Caco-2 (cell line): ENCODE measurements at regions of chr6 and their contacts with region 1.

Region 1: DNA sequence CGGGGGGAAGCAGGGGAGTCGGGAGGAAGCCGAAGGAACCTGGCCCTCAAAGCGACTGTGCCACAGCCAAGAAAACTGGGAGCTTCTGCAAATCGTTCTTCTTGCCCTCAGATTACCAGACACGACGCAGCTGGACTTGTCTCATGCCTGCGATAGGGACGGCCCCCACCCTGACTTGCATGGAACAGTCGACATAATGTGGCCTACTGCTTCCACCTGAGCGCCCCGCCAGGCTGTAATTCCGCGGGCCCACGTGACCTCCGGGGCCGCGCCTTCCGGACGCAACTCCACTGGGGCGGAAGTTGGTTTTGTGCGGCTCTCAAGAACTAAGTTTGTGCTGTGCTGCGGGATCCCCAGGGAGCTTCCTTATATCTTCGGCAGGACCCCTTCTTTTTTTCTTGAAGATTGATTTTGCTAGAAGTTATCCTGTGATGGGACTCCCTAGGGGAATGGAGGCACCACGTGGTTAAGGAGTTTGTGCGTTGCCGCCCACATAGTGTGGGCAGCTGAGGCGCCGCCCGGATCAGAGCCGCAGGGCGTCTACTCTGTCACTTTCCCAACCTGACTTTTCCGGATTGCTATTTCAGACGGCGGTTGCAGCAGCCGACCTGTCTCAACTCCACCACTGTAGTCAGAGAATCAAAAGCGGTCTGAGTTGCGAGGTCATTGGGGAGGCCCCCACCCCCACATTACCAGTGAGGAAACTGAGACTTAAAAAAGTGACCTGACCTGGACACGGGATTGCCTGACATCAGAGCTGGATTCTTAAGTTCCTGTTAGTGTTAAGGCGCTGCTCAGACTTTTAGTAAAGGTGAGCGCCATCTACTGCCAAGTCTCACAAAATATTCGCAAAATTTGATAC is 540 bp upstream of the CD164 start:
- DNase-seq: peak; percentile 91
- H3K4me3 ChIP-seq: peak overlapping the region; percentile 92
- H3K4me3 Mint-ChIP-seq: peak overlapping the region; percentile 97
- H3K27ac Mint-ChIP-seq: peak overlapping the region; percentile 99
- H3K4me1 ChIP-seq: peaks cover 22% of the 10 kb centered on the region
- H3K4me1 Mint-ChIP-seq: peaks cover 27% of the 10 kb centered on the region
- H3K27me3 ChIP-seq: no peaks in the 10 kb centered on the region
- H3K27me3 Mint-ChIP-seq: no peaks in the 10 kb centered on the region
- CTCF ChIP-seq: peak; percentile 44 to 54

Region 2: DNA sequence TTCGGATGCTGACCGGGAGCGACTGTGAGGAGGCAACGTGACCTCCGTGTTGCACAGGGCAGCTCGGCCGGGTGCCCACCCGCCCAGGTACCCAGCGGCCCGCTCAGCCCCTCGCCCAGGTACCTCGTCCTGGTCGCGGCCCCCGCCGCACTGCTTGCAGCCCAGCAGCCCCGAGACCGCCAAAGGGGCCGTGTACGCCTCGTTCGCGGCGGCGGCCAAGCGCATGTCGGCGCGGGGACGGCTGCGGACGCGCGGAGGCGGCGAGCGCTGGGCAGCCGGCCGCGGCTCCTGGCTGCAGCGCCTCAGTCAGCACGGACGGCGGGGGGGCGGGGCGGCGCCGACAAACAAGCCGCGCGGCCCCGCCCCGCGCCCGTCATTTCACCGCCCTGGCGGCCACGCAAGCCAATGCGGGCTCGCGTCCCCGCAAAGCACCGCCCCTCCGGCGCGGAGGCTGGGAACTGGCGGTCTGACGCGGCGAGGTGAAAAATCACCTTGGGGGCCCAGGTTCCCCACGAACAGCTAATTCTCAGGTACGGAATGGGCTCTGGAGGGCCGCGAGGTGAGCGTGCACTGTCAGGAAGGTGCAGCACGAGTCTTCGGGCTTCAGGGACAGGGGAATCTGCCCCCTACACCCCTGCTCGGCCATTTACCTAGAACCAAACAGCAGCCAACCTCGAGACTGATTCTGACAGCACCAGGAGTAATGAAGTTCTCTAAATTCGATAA is 373.4 kb before region 1 on chr6:
- CTCF ChIA-PET with region 1: no interaction called
- POLR2A ChIA-PET with region 1: no interaction called
- intact Hi-C with region 1: no loop called
- DNase-seq: peak; percentile 88 to 95
- H3K4me3 ChIP-seq: peak overlapping the region; percentile 82
- H3K4me3 Mint-ChIP-seq: peak overlapping the region; percentile 76
- H3K27ac Mint-ChIP-seq: peak overlapping the region; percentile 74
- H3K4me1 ChIP-seq: peaks cover 28% of the 10 kb centered on the region
- H3K4me1 Mint-ChIP-seq: peaks cover 18% of the 10 kb centered on the region
- H3K27me3 ChIP-seq: no peaks in the 10 kb centered on the region
- H3K27me3 Mint-ChIP-seq: no peaks in the 10 kb centered on the region
- CTCF ChIP-seq: no peak

Region 3: DNA sequence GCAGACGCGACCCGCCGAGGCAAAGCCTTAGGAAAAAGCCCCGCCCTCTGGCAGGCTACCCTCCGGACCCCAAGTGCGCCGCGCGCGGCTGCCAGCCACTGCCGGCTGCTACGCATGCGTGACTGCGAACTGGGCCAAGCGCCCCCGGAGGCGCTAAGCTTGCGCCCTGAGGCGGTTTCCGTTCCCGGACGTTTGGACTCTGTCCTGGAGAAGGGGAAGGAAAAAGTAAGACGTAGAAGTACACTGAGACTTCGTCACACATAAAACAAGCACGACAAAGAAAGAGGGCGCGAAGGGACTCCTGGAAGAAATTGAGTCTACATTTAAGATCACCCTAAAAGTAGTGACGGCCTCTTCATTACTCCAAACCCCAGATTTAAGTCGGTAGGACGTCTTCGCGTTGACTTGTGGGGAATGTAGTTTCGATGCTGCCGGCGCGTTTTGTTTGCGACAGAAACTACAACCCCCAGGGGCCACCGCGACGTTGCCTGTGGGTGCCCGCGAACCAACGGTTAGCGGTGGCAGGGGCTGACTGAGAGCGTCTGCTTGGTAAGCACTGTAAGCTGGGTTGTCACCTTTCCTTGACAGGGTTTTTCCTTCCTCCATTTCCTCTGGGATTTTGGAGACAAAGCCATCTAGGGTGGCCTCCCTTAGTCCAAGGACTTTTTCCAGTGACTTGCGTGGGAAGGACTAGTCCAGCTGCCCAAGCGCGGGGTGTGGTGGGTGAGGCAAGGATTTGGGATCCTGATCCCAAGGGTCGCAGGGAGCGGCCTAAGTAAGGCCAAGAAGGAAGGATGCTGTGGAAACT is 287.6 kb before region 1 on chr6 and contains the start of gene CEP57L1:
- CTCF ChIA-PET with region 1: interaction called, 13 read pairs
- POLR2A ChIA-PET with region 1: interaction called, 5 read pairs
- intact Hi-C with region 1: loop called (anchors 1 kb)
- DNase-seq: peak; percentile 98 to 99
- H3K4me3 ChIP-seq: peak within 1 kb of the TSS; percentile 63
- H3K4me3 Mint-ChIP-seq: peak within 1 kb of the TSS; percentile 97
- H3K27ac Mint-ChIP-seq: peak within 1 kb of the TSS; percentile 100
- H3K4me1 ChIP-seq: peaks cover 7% of the 10 kb centered on the region; the same call in 1 of the 2 replicates
- H3K4me1 Mint-ChIP-seq: peaks cover 15% of the 10 kb centered on the region
- H3K27me3 ChIP-seq: no peaks in the 10 kb centered on the region
- H3K27me3 Mint-ChIP-seq: no peaks in the 10 kb centered on the region
- CTCF ChIP-seq: no peak
- total RNA-seq, gene CEP57L1: 11.0 and 12.7 TPM in 2 replicates

Region 4: GRCh38 chr6:109187399-109188114 is 195.2 kb before region 1 on chr6:
- CTCF ChIA-PET with region 1: interaction called, 26 read pairs
- POLR2A ChIA-PET with region 1: interaction called, 3 read pairs
- intact Hi-C with region 1: loop called (anchors 1 kb)
- DNase-seq: peak in 1 of 2 experiments; percentile 63
- H3K4me3 ChIP-seq: no peak overlapping the region
- H3K4me3 Mint-ChIP-seq: no peak overlapping the region
- H3K27ac Mint-ChIP-seq: no peak overlapping the region
- H3K4me1 ChIP-seq: no peaks in the 10 kb centered on the region
- H3K4me1 Mint-ChIP-seq: peaks cover 2% of the 10 kb centered on the region
- H3K27me3 ChIP-seq: no peaks in the 10 kb centered on the region
- H3K27me3 Mint-ChIP-seq: peaks cover 3% of the 10 kb centered on the region
- CTCF ChIP-seq: peak; percentile 90 to 97

Region 5: GRCh38 chr6:109251839-109252238 is 131.0 kb before region 1 on chr6:
- CTCF ChIA-PET with region 1: no interaction called
- POLR2A ChIA-PET with region 1: no interaction called
- intact Hi-C with region 1: loop called (anchors 2 kb)
- DNase-seq: no peak
- H3K4me3 ChIP-seq: peak overlapping the region; percentile 53
- H3K4me3 Mint-ChIP-seq: peak overlapping the region; percentile 96
- H3K27ac Mint-ChIP-seq: peak overlapping the region; percentile 99
- H3K4me1 ChIP-seq: peaks cover 17% of the 10 kb centered on the region
- H3K4me1 Mint-ChIP-seq: no peaks in the 10 kb centered on the region
- H3K27me3 ChIP-seq: no peaks in the 10 kb centered on the region
- H3K27me3 Mint-ChIP-seq: no peaks in the 10 kb centered on the region
- CTCF ChIP-seq: no peak

Region 6: DNA sequence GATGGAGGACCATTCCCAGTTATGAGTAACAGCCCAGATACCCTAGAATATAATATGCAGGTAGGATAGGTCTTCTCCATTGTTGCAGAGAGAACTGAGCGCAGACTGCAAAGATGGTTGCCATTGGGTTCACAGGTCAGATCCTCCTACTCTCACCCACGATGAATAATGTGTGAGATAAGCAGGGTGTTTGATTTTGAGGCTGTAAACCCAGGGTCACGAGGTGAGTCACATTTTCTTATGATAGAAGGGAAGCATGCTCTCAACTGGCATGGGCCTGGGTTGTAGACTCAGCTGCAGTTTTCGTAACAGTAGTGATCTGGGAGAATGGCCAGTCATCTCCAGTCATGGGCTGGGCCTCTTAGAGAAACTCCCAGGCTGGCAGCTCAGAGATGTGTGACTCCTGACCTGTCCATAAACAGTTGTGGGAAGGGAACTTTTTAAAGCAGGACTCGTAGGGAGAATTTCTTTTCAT is 74.8 kb before region 1 on chr6:
- CTCF ChIA-PET with region 1: no interaction called
- POLR2A ChIA-PET with region 1: no interaction called
- intact Hi-C with region 1: loop called (anchors 5 kb)
- DNase-seq: peak; percentile 67 to 81
- H3K4me3 ChIP-seq: no peak overlapping the region
- H3K4me3 Mint-ChIP-seq: no peak overlapping the region
- H3K27ac Mint-ChIP-seq: no peak overlapping the region
- H3K4me1 ChIP-seq: peaks cover 17% of the 10 kb centered on the region
- H3K4me1 Mint-ChIP-seq: peaks cover 11% of the 10 kb centered on the region
- H3K27me3 ChIP-seq: no peaks in the 10 kb centered on the region
- H3K27me3 Mint-ChIP-seq: no peaks in the 10 kb centered on the region
- CTCF ChIP-seq: no peak

Region 7: GRCh38 chr6:109397020-109397419 is 14.2 kb after region 1 on chr6:
- CTCF ChIA-PET with region 1: interaction called, 14 read pairs
- POLR2A ChIA-PET with region 1: interaction called, 4 read pairs
- intact Hi-C with region 1: loop called (anchors 1 kb)
- DNase-seq: peak in 1 of 2 experiments; percentile 21
- H3K4me3 ChIP-seq: no peak overlapping the region
- H3K4me3 Mint-ChIP-seq: no peak overlapping the region
- H3K27ac Mint-ChIP-seq: no peak overlapping the region
- H3K4me1 ChIP-seq: no peaks in the 10 kb centered on the region
- H3K4me1 Mint-ChIP-seq: no peaks in the 10 kb centered on the region
- H3K27me3 ChIP-seq: no peaks in the 10 kb centered on the region
- H3K27me3 Mint-ChIP-seq: peaks cover 6% of the 10 kb centered on the region
- CTCF ChIP-seq: peak; percentile 28 to 42

Region 8: DNA sequence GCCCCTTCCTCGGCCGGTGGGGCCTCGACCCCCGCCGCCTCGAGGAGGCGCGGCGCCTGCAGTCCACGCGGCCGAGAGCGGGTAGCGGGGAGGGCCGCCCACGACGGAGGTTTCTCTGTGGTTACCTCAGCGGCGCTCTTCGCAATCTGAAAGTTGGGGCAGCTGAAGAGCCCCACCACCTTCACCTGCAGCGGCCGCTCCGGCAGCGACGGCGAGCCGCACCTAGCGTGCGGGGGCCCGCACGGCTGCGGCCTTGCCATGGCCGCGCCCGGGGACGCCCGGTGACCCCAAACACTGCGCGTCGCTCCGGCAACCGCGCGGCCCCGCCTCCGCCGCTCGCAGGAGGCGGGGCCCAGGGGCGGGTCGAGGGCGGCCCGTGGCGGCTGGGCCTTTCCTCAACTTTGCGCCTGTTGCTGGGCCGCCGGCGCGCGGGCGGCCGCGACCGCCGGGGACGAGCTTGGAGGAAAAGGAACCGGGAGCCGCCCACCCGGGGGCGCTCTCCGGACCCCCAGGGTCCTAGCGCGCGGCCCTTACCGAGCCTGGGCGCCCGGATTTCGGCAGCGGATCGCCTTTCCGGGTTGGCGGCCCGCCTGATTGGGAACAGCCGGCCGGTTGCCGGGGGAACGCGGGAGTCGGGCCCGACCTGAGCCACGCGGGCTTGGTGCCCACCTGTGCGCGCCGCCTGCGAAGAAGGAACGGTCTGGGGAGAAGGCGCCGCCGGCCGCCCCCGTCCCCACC is 57.7 kb after region 1 on chr6 and contains the starts of genes PPIL6 and SMPD2:
- CTCF ChIA-PET with region 1: interaction called, 3 read pairs
- POLR2A ChIA-PET with region 1: interaction called, 5 read pairs
- intact Hi-C with region 1: loop called (anchors 2 kb)
- DNase-seq: peak; percentile 83 to 90
- H3K4me3 ChIP-seq: peak within 1 kb of the TSS; percentile 57
- H3K4me3 Mint-ChIP-seq: peak within 1 kb of the TSS; percentile 96
- H3K27ac Mint-ChIP-seq: peak within 1 kb of the TSS; percentile 97
- H3K4me1 ChIP-seq: peaks cover 7% of the 10 kb centered on the region
- H3K4me1 Mint-ChIP-seq: no peaks in the 10 kb centered on the region
- H3K27me3 ChIP-seq: no peaks in the 10 kb centered on the region
- H3K27me3 Mint-ChIP-seq: no peaks in the 10 kb centered on the region
- CTCF ChIP-seq: peak in 1 of 2 experiments; percentile 33
- total RNA-seq, gene PPIL6: 0.30 TPM in 1 of 2 replicates, not detected in the other
- total RNA-seq, gene SMPD2: 12.3 and 12.8 TPM in 2 replicates